Naive thymus-derived CD4-positive, alpha-beta T cell (primary cell): ENCODE measurements at regions of chr19 and their contacts with region 1.

Region 1: GRCh38 chr19:36489118-36489919 is at the start of gene ZNF566:
- DNase-seq: peak; percentile 74 to 98 (median 94)
- ATAC-seq: peak; percentile 95
- H3K4me3 ChIP-seq: peak within 1 kb of the TSS; percentile 97
- H3K4me3 Mint-ChIP-seq: peak within 1 kb of the TSS; percentile 93 to 99 (median 98)
- H3K27ac ChIP-seq: peak within 1 kb of the TSS; percentile 90
- H3K27ac Mint-ChIP-seq: peak within 1 kb of the TSS; percentile 93 to 99 (median 98)
- H3K4me1 ChIP-seq: peaks cover 9 to 10% of the 10 kb centered on the region in 2 donors
- H3K4me1 Mint-ChIP-seq: peaks cover 22 to 43% (median 30%) of the 10 kb centered on the region in 7 donors
- H3K27me3 ChIP-seq: no peaks in the 10 kb centered on the region
- H3K27me3 Mint-ChIP-seq: no peaks in the 10 kb centered on the region
- total RNA-seq, gene ZNF566: 9.2 to 29.8 (median 9.3) TPM

Region 2: DNA sequence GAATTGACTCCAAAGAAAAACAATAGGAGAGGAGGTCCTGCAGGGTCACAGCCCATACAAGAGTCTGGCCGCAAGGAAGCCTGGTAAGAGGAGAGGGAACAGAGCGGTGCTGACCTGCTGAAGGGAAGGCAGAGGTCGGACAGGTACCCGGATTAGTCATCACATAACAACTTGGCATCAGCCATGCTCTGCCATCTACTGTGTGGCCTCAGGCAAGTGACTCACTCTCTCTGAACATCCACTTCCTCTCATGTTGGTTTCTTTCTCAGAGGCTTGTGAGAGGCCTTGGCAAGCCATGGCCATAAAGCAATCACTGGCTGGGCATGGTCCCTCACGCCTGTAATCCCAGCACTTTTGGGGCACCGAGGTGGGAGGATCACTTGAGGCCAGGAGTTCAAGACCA is 356.8 kb before region 1 on chr19:
- CTCF ChIA-PET with region 1: no interaction called
- POLR2A ChIA-PET with region 1: no interaction called
- intact Hi-C with region 1: loop called in 1 of 2 experiments (anchors 1 kb)
- DNase-seq: no peak
- ATAC-seq: peak; percentile 50
- H3K4me3 ChIP-seq: no peak overlapping the region
- H3K4me3 Mint-ChIP-seq: peak overlapping the region in 2 of 10 donors; percentile 12 to 29
- H3K27ac ChIP-seq: no peak overlapping the region
- H3K27ac Mint-ChIP-seq: peak overlapping the region in 1 of 9 donors; percentile 80
- H3K4me1 ChIP-seq: no peaks in the 10 kb centered on the region
- H3K4me1 Mint-ChIP-seq: peaks cover 0 to 34% (median 5%) of the 10 kb centered on the region in 7 donors
- H3K27me3 ChIP-seq: no peaks in the 10 kb centered on the region
- H3K27me3 Mint-ChIP-seq: no peaks in the 10 kb centered on the region

Region 3: GRCh38 chr19:36392916-36393673 is 96.2 kb before region 1 on chr19:
- CTCF ChIA-PET with region 1: no interaction called
- POLR2A ChIA-PET with region 1: no interaction called
- intact Hi-C with region 1: no loop called
- DNase-seq: no peak
- ATAC-seq: no peak
- H3K4me3 ChIP-seq: peak overlapping the region; percentile 12
- H3K4me3 Mint-ChIP-seq: no peak overlapping the region
- H3K27ac ChIP-seq: no peak overlapping the region
- H3K27ac Mint-ChIP-seq: no peak overlapping the region
- H3K4me1 ChIP-seq: no peaks in the 10 kb centered on the region
- H3K4me1 Mint-ChIP-seq: no peaks in the 10 kb centered on the region
- H3K27me3 ChIP-seq: no peaks in the 10 kb centered on the region
- H3K27me3 Mint-ChIP-seq: no peaks in the 10 kb centered on the region

Region 4: DNA sequence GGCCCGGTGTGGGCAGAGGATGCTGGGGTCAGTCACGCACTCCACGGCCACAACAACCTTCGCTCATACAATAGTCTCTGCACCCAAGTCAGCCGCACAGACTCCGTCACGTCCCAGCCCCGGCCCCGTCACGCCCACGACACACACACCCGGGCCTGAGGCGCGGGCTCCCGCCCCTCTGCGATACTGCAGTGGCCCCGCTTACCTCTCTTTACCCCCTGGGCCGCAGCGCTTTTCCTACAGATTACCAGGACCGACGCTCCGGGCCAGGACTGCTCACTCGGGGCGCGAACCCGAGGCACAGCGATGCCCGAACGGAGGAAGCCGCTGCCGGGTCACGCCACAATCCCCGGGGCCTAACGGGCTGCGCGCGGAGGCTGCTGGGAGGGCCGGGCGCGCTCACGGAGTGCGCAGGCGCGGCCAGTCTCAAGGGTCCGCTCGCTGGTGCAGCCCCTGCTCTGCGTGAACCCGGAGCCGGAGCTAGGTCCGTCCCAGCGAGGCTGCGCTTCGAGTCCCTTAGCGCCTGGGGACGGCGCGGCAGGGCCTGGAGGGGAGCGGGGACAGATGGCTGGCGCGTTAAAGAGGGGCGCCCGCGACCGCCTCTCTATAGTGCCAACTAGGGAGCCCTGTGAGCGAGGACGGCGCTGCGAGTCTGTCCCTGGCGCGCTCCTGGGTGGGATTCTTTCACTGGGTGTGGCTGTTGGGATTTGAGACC is 70.9 kb before region 1 on chr19 and contains the start of gene ZFP82:
- CTCF ChIA-PET with region 1: no interaction called
- POLR2A ChIA-PET with region 1: interaction called, 8 read pairs
- intact Hi-C with region 1: loop called (anchors 1 kb)
- DNase-seq: peak; percentile 47 to 83 (median 76)
- ATAC-seq: peak; percentile 94
- H3K4me3 ChIP-seq: peak within 1 kb of the TSS; percentile 82
- H3K4me3 Mint-ChIP-seq: peak within 1 kb of the TSS; percentile 89 to 96 (median 93)
- H3K27ac ChIP-seq: peak within 1 kb of the TSS; percentile 83
- H3K27ac Mint-ChIP-seq: peak within 1 kb of the TSS; percentile 82 to 95 (median 91)
- H3K4me1 ChIP-seq: peaks cover 6 to 13% of the 10 kb centered on the region in 2 donors
- H3K4me1 Mint-ChIP-seq: peaks cover 10 to 36% (median 21%) of the 10 kb centered on the region in 7 donors
- H3K27me3 ChIP-seq: peaks cover 0 to 9% of the 10 kb centered on the region in 2 donors
- H3K27me3 Mint-ChIP-seq: peaks cover 14 to 23% (median 22%) of the 10 kb centered on the region in 5 donors
- total RNA-seq, gene ZFP82: 2.2 to 8.2 (median 5.7) TPM

Region 5: GRCh38 chr19:36605101-36605876 is 116.0 kb after region 1 on chr19 and contains the start of gene ZNF382:
- CTCF ChIA-PET with region 1: no interaction called
- POLR2A ChIA-PET with region 1: interaction called, 10 read pairs
- intact Hi-C with region 1: loop called (anchors 1 kb)
- DNase-seq: peak; percentile 77 to 92 (median 86)
- ATAC-seq: peak; percentile 80
- H3K4me3 ChIP-seq: peak within 1 kb of the TSS; percentile 95
- H3K4me3 Mint-ChIP-seq: peak within 1 kb of the TSS; percentile 81 to 99 (median 93)
- H3K27ac ChIP-seq: peak within 1 kb of the TSS; percentile 84
- H3K27ac Mint-ChIP-seq: peak within 1 kb of the TSS; percentile 78 to 98 (median 93)
- H3K4me1 ChIP-seq: peaks cover 7 to 15% of the 10 kb centered on the region in 2 donors
- H3K4me1 Mint-ChIP-seq: peaks cover 20 to 32% (median 27%) of the 10 kb centered on the region in 7 donors
- H3K27me3 ChIP-seq: no peaks in the 10 kb centered on the region
- H3K27me3 Mint-ChIP-seq: no peaks in the 10 kb centered on the region
- total RNA-seq, gene ZNF382: 5.4 to 20.2 (median 12.2) TPM

Region 6: DNA sequence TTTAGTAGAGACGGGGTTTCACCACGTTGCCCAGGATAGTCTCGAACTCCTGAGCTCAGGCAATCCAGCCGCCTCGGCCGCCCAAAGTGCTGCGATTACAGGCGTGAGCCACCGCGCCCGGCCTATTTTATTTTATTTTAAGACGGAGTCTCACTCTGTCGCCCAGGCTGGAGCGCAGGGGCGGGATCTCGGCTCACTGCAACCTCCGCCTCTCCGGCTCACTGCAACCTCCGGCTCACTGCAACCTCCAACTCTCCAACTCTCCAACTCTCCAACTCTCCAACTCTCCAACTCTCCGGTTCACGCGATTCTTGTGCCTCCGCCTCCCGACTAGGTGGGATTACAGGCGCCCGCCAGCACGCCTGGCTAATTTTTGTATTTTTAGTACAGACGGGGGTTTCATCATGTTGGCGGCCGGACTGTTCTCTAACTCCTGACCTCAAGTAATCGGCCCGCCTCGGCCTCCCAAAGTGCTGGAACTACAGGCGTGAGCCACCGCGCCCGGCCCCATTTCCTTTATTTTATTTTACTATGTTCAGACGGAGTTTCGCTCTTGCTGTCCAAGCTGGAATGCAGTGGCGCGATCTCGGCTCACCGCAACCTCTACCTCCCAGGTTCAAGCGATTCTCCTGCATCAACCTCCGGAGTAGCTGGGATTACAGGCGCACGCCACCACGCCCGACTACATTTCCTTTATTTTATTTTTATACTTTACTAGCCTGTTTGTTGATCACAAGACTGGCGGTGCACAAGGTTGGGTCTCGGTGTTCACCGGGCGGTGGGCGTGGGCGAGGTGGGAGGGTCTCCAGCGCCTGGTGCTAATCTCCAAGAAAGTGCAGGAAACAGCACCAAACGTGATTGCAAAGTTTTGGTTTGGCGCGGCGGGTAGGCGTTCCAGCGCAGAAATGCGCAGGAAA is 307.0 kb after region 1 on chr19:
- CTCF ChIA-PET with region 1: no interaction called
- POLR2A ChIA-PET with region 1: no interaction called
- intact Hi-C with region 1: loop called in 1 of 2 experiments (anchors 1 kb)
- DNase-seq: no peak
- ATAC-seq: no peak
- H3K4me3 ChIP-seq: peak overlapping the region; percentile 100
- H3K4me3 Mint-ChIP-seq: peak overlapping the region; percentile 87 to 99 (median 98)
- H3K27ac ChIP-seq: peak overlapping the region; percentile 79
- H3K27ac Mint-ChIP-seq: peak overlapping the region; percentile 87 to 100 (median 98)
- H3K4me1 ChIP-seq: no peaks in the 10 kb centered on the region
- H3K4me1 Mint-ChIP-seq: peaks cover 0 to 28% (median 16%) of the 10 kb centered on the region in 7 donors
- H3K27me3 ChIP-seq: no peaks in the 10 kb centered on the region
- H3K27me3 Mint-ChIP-seq: peaks cover 0 to 10% (median 9%) of the 10 kb centered on the region in 5 donors

Region 7: DNA sequence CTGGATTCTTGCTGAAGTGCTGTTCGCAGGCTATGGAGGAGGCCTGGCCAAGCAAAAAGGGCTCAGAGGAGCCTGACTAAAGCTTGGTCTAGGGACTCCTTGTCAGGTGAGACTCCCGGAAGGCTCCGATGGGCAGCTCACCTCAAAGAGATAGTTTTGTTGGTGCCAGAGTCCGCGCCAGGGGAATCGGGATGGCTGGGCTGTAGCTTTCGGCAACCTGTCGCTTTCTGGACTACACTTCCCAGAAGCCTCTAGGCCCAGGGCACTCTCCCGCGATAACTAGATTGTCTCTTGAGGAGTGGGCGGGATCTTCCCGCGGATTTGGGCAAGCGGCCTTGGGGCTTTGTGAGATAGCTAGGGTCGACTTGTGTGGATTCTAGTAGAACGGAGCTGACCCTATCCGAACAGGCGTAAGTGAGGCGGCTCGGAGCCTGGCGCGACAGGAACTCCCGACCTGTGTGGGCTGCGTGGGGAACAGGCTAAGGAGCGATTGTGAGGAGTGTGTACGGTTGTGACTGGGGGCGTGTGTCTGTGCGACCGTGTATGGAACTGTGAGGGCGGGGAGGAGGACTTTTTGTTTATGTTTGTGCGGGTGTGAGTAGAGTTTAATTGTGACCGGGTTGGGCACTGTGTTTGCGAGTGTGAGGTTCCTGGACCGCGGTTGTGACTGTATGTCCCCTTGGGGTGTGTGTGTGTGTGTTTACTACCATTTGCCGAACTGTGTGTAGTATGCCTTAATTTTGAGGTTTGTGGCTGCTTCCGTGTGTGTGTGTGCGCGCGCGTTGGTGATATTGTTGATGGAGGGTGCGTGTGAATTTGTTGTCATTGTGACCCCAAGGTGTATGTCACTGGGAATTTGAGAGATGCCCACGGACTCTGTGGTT is 361.5 kb after region 1 on chr19 and contains the start of gene ZNF345:
- CTCF ChIA-PET with region 1: no interaction called
- POLR2A ChIA-PET with region 1: interaction called, 15 read pairs
- intact Hi-C with region 1: loop called (anchors 1 kb)
- DNase-seq: peak; percentile 62 to 91 (median 88)
- ATAC-seq: peak; percentile 93
- H3K4me3 ChIP-seq: peak within 1 kb of the TSS; percentile 92
- H3K4me3 Mint-ChIP-seq: no peak within 1 kb of the TSS
- H3K27ac ChIP-seq: peak within 1 kb of the TSS; percentile 86
- H3K27ac Mint-ChIP-seq: no peak within 1 kb of the TSS
- H3K4me1 ChIP-seq: peaks cover 9 to 16% of the 10 kb centered on the region in 2 donors
- H3K4me1 Mint-ChIP-seq: peaks cover 0 to 22% (median 13%) of the 10 kb centered on the region in 7 donors
- H3K27me3 ChIP-seq: no peaks in the 10 kb centered on the region
- H3K27me3 Mint-ChIP-seq: no peaks in the 10 kb centered on the region
- total RNA-seq, gene ZNF345: 6.8 to 18.2 (median 7.8) TPM

Region 8: DNA sequence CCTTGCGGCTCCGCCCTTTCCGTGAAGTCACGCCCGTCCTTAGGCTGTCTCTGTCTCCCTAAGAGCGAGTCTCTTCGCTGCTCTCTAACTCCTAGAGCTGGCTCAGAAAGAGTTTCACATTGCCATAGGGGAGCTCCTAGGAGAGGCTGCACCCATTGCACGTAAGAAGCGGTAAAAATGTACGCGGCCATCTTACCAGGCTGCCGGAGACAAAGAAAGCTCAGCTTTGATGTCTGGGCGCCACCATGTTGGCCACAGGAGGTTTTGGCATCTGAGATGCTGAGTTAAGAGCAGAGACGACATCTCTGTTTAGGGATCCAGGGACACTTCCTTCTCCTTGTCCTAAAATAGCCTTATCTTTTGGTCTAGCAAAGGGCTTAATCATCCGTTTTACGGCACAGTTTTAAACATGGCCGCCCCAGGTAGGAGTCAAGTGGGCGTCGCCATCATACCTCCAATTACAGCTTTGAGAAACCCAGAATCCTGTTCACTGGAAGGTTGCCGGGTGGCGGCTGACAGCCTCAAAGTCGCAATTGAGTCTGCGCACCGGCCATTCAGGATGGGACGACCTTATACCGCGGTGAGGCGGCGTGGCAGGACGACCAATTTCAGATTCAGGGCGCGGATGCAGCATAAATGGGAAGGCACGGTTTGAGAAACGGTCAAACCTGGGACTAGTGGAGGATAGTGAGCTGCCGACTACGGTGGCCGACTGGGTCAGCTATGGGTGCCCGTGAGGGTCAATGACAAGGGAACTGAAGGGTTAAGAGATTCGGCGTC is 1017.3 kb after region 1 on chr19 and contains the start of gene ZNF793:
- CTCF ChIA-PET with region 1: no interaction called
- POLR2A ChIA-PET with region 1: no interaction called
- intact Hi-C with region 1: loop called in 1 of 2 experiments (anchors 2 kb)
- DNase-seq: peak; percentile 33 to 88 (median 83)
- ATAC-seq: peak; percentile 90
- H3K4me3 ChIP-seq: peak within 1 kb of the TSS; percentile 83
- H3K4me3 Mint-ChIP-seq: no peak within 1 kb of the TSS
- H3K27ac ChIP-seq: peak within 1 kb of the TSS; percentile 90
- H3K27ac Mint-ChIP-seq: no peak within 1 kb of the TSS
- H3K4me1 ChIP-seq: peaks cover 0 to 14% of the 10 kb centered on the region in 2 donors
- H3K4me1 Mint-ChIP-seq: peaks cover 0 to 2% (median 0%) of the 10 kb centered on the region in 7 donors
- H3K27me3 ChIP-seq: no peaks in the 10 kb centered on the region
- H3K27me3 Mint-ChIP-seq: peaks cover 0 to 5% (median 0%) of the 10 kb centered on the region in 5 donors
- total RNA-seq, gene ZNF793: 1.1 to 11.7 (median 6.0) TPM